ENCODE measurements at regions of chr1 and their contacts with region 1.

Region 1: GRCh38 chr1:234944439-234945344 is 183.9 kb downstream of the TOMM20 start:
- DNase-seq: no peak
- ATAC-seq: peak in 1 of 4 donors; percentile 33
- H3K4me3 ChIP-seq: no peak overlapping the region
- H3K27ac ChIP-seq: no peak overlapping the region
- H3K4me1 ChIP-seq: no peaks in the 10 kb centered on the region
- H3K27me3 ChIP-seq: no peaks in the 10 kb centered on the region
- CTCF ChIP-seq: no peak
- POLR2A ChIP-seq: no peak

Region 2: GRCh38 chr1:234881893-234882771 is 62.6 kb before region 1 on chr1:
- intact Hi-C with region 1: loop called in 1 of 2 experiments (anchors 10 kb)
- DNase-seq: no peak
- ATAC-seq: no peak
- H3K4me3 ChIP-seq: no peak overlapping the region
- H3K27ac ChIP-seq: no peak overlapping the region
- H3K4me1 ChIP-seq: peaks cover 0 to 14% (median 2%) of the 10 kb centered on the region in 4 donors
- H3K27me3 ChIP-seq: no peaks in the 10 kb centered on the region
- CTCF ChIP-seq: no peak
- POLR2A ChIP-seq: no peak